Uterus (tissue), 4 donors: ENCODE measurements at regions of chr6 and their contacts with region 1.

Region 1: GRCh38 chr6:44172731-44173500 is 14.3 kb downstream of the CAPN11 start:
- DNase-seq: peak; percentile 81 to 85
- H3K4me3 ChIP-seq: no peak overlapping the region
- H3K27ac ChIP-seq: no peak overlapping the region
- H3K4me1 ChIP-seq: peaks cover 0 to 4% of the 10 kb centered on the region in 2 donors
- H3K27me3 ChIP-seq: no peaks in the 10 kb centered on the region
- CTCF ChIP-seq: peak; percentile 76 to 93 (median 91)
- POLR2A ChIP-seq: no peak

Region 2: DNA sequence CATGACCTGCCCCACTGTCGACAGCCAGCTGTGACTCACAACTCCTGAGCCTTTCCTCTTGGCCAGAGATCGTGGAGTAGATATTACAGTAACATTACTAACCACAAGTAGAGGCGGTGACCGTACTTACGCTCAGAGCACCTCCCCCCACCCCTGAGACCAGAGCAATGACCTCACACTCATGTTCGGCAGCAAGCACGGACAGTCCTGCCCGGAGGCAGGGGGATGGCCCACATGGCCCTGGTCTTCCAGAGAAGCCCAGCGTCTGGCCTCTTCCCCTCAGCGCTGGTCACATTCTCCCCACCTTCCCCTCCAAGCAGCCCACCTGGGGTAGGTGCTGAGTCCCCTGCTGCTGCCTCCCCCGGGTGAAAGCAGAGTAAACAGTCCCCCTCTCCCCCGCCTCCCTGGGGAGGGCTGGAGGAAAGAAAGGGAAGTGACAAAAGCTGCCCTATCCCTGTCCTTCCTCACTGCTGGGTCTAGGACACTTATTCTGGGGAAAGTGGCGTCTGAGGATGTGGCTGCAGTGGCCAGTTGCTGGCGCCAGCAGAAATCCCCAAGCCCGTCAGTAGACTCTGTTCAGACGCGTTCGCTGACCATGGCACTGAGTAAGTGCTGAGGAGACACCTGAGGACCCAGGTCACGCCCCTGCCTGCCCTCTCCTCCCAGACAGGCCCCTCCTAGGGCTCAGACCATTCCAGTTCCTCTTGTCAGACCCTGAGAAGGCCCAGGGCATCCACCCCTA is 114.1 kb before region 1 on chr6:
- intact Hi-C with region 1: no loop called
- DNase-seq: peak; percentile 76 to 88
- H3K4me3 ChIP-seq: no peak overlapping the region
- H3K27ac ChIP-seq: peak overlapping the region; percentile 84 to 87
- H3K4me1 ChIP-seq: peaks cover 7 to 10% of the 10 kb centered on the region in 2 donors
- H3K27me3 ChIP-seq: no peaks in the 10 kb centered on the region
- CTCF ChIP-seq: no peak
- POLR2A ChIP-seq: peak in 1 of 2 donors; percentile 37

Region 3: DNA sequence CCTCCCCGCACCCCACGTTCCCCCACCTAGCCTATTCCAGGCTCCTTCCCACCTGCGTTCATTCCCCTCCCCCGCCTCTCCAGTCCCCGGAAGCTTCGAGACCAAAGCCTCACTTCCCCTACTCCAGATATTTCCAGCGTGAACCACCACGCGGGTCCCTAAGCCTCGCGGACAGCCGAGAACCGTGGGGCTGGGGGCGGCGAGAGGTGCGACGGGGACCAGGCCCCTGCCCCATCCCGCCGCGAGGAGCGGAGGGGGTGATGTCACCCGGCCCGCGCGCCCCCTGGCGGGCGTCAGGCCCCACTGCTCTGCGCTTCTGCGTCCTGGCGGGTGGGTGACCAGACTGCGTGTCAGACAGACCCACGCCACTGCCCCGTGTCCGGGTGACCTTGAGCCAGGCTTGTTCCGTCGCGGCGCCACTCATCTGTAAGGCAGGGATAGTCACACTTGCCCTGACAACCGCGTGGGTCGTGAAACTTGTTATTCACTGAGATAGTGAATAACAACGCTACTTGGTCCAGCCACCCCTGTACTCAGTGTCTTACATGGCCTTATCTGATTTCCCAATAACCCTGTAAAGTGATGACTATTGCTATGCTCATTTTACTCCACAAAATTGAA is 65.0 kb after region 1 on chr6:
- intact Hi-C with region 1: loop called (anchors 10 kb)
- DNase-seq: peak; percentile 79 to 85
- H3K4me3 ChIP-seq: peak overlapping the region; percentile 57 to 71
- H3K27ac ChIP-seq: peak overlapping the region; percentile 97 to 99
- H3K4me1 ChIP-seq: peaks cover 16 to 35% of the 10 kb centered on the region in 2 donors
- H3K27me3 ChIP-seq: no peaks in the 10 kb centered on the region
- CTCF ChIP-seq: peak; percentile 92 to 99 (median 97)
- POLR2A ChIP-seq: peak; percentile 6 to 50